Thyroid gland (tissue), 4 donors: ENCODE measurements at regions of chr16 and their contacts with region 1.

Region 1: DNA sequence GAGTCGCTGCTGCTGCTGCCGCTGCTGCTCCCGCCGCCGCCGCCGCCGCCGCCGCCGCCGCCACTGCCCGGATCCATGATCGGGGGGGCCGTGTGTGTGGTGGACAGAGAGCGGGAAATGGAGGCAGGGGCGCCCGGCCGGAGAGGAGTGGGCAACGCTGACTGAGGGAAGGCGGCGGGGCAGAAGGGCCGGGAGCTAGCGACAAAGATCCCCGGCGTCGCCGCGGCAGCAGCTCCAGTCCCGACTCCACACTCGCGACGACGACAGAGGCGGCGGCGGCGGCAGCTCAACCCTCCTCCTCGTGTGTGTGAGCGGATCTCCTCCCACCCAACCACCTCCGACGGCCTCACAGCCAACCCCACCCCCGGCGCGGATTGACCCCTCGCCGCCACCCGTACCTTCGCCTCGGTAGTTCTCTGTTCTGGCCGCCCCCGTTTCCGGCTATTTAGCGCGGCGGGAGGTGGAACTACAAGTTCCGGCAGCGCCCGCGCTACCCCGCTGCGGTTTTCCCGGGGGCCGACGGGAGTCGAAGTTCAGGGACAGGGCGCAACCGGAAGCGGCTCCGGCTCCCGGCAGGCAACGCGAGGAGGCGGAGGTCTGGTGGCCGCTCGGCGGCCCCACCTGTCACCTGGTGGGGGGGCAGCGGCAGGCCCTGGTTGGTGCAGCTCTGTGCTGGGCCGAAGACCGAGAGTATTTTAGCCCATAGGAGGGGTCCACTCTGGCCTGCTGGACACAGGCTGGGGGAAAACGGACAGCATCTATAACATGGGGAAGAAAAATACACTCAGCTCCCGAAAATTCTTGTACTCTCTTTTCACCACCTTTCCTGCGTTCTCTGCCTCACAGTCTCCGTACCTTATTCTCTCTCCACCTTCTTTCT is at the start of gene GSPT1:
- DNase-seq: peak; percentile 99 to 100
- H3K4me3 ChIP-seq: peak within 1 kb of the TSS; percentile 59 to 99 (median 77)
- H3K27ac ChIP-seq: peak within 1 kb of the TSS; percentile 85 to 92 (median 88)
- H3K4me1 ChIP-seq: peaks cover 25 to 26% of the 10 kb centered on the region in 2 donors
- H3K27me3 ChIP-seq: no peaks in the 10 kb centered on the region
- CTCF ChIP-seq: peak in 4 of 6 experiments; percentile 13 to 34 (median 17)
- POLR2A ChIP-seq: peak; percentile 82 to 94
- total RNA-seq, gene GSPT1: 71.9 to 106 (median 86.6) TPM

Region 2: GRCh38 chr16:11851294-11852091 is 64.4 kb before region 1 on chr16 and contains the start of gene RSL1D1:
- intact Hi-C with region 1: loop called (anchors 5 kb)
- DNase-seq: peak; percentile 84 to 88
- H3K4me3 ChIP-seq: peak within 1 kb of the TSS; percentile 52 to 96 (median 72)
- H3K27ac ChIP-seq: peak within 1 kb of the TSS; percentile 71 to 91 (median 76)
- H3K4me1 ChIP-seq: peaks cover 14 to 18% of the 10 kb centered on the region in 2 donors
- H3K27me3 ChIP-seq: no peaks in the 10 kb centered on the region
- CTCF ChIP-seq: no peak
- POLR2A ChIP-seq: peak in 1 of 2 donors; percentile 87
- total RNA-seq, gene RSL1D1: 82.4 to 426 (median 182) TPM